K562 (cell line): ENCODE measurements at regions of chr14 and their contacts with region 1.

Region 1: GRCh38 chr14:95442633-95443021 is 73.8 kb downstream of the SYNE3 start:
- DNase-seq: peak; percentile 67 to 77 (median 72)
- ATAC-seq: peak; percentile 98
- H3K4me3 ChIP-seq: no peak overlapping the region
- H3K27ac ChIP-seq: no peak overlapping the region
- H3K4me1 ChIP-seq: peaks cover 0 to 3% of the 10 kb centered on the region in 2 experiments; a peak in 1 of 5 replicates
- H3K27me3 ChIP-seq: peaks cover 0 to 21% of the 10 kb centered on the region in 2 experiments; a peak in 3 of 5 replicates
- CTCF ChIP-seq: peak; percentile 74 to 83 (median 78)
- EP300 ChIP-seq: no peak
- POLR2A ChIP-seq: no peak
- RAD21 ChIP-seq: peak; percentile 58 to 80

Region 2: GRCh38 chr14:95483309-95484165 is 40.9 kb after region 1 on chr14:
- CTCF ChIA-PET with region 1: no interaction called
- POLR2A ChIA-PET with region 1: no interaction called
- in situ Hi-C with region 1: no loop called
- intact Hi-C with region 1: no loop called
- DNase-seq: peak in 2 of 4 experiments; percentile 13 to 16
- ATAC-seq: no peak
- H3K4me3 ChIP-seq: no peak overlapping the region
- H3K27ac ChIP-seq: no peak overlapping the region
- H3K4me1 ChIP-seq: peaks cover 0 to 4% of the 10 kb centered on the region in 2 experiments; a peak in 2 of 5 replicates
- H3K27me3 ChIP-seq: peaks cover 0 to 20% of the 10 kb centered on the region in 2 experiments; a peak in 3 of 5 replicates
- CTCF ChIP-seq: no peak
- EP300 ChIP-seq: no peak
- POLR2A ChIP-seq: no peak
- RAD21 ChIP-seq: no peak

Region 3: GRCh38 chr14:95527387-95528002 is 84.9 kb after region 1 on chr14:
- CTCF ChIA-PET with region 1: interaction called, 5 read pairs
- POLR2A ChIA-PET with region 1: no interaction called
- in situ Hi-C with region 1: loop called (anchors 5 kb)
- intact Hi-C with region 1: loop called (anchors 1 kb)
- DNase-seq: peak in 1 of 4 experiments; percentile 51
- ATAC-seq: peak; percentile 25; the same call in 1 of the 3 replicates
- H3K4me3 ChIP-seq: no peak overlapping the region
- H3K27ac ChIP-seq: 0 out of 3 replicates have a peak overlapping the region, but pooled peaks have one; percentile 47
- H3K4me1 ChIP-seq: peaks cover 0 to 64% of the 10 kb centered on the region in 2 experiments; a peak in 3 of 5 replicates
- H3K27me3 ChIP-seq: no peaks in the 10 kb centered on the region
- CTCF ChIP-seq: peak; percentile 46 to 73 (median 62); a peak in 5 of 6 replicates
- EP300 ChIP-seq: no peak
- POLR2A ChIP-seq: no peak
- RAD21 ChIP-seq: peak; percentile 45 to 69